ENCODE measurements at regions of chr19 and their contacts with region 1.

Region 1: DNA sequence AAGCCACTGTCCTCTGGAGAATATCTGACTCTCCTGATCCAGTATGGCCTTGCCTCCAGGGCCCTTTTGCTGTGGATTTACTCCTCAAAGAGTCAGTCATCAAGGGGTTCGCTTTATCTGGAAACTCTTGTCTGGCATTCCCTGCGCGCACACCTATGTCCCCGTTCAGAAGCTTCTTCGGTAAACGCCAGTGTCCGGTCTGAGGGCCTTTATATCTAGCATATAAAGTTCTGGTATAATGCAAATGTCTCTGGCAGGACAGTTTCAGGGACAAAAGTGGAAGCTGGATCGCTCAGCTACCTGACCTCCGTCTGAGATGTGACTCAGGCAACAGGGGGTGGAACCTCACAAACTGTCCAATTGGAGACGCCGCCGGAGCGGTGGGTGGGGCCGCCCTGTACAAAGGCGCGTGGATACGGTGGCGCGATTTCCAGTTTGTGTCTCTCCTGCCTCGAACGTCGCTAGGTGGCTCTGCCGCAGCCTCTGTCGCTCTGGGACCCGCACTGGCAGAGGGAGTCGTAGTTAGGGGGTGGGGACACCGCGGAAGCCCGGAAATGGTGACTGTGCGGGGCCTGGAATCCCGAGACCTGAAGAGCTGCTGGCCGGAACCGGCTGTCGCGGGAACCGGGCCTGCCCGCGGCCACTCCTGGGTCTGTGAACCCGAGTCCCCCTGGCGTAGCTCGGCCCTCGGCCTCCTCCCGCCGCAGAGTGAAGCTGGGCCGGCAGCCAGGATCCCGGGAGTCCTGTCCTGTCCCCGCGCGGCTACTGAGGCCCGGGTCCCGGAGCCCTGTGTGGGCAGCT is 10.6 kb upstream of the ZNF709 start:
- DNase-seq: peak; percentile 96
- H3K4me3 ChIP-seq: peak overlapping the region; percentile 70
- H3K4me3 Mint-ChIP-seq: peak overlapping the region; percentile 84
- H3K27ac Mint-ChIP-seq: peak overlapping the region; percentile 95
- H3K4me1 ChIP-seq: no peaks in the 10 kb centered on the region
- H3K4me1 Mint-ChIP-seq: no peaks in the 10 kb centered on the region
- H3K27me3 ChIP-seq: no peaks in the 10 kb centered on the region; the same call in 1 of the 2 replicates
- H3K27me3 Mint-ChIP-seq: no peaks in the 10 kb centered on the region
- CTCF ChIP-seq: peak; percentile 23 to 69

Region 2: GRCh38 chr19:12440541-12441316 is 54.5 kb before region 1 on chr19 and contains the start of gene ZNF443:
- CTCF ChIA-PET with region 1: interaction called, 3 read pairs
- POLR2A ChIA-PET with region 1: interaction called, 7 read pairs
- intact Hi-C with region 1: loop called (anchors 1 kb)
- DNase-seq: peak; percentile 99
- H3K4me3 ChIP-seq: peak within 1 kb of the TSS; percentile 80
- H3K4me3 Mint-ChIP-seq: peak within 1 kb of the TSS; percentile 99
- H3K27ac Mint-ChIP-seq: peak within 1 kb of the TSS; percentile 97
- H3K4me1 ChIP-seq: no peaks in the 10 kb centered on the region
- H3K4me1 Mint-ChIP-seq: no peaks in the 10 kb centered on the region
- H3K27me3 ChIP-seq: no peaks in the 10 kb centered on the region
- H3K27me3 Mint-ChIP-seq: no peaks in the 10 kb centered on the region
- CTCF ChIP-seq: no peak
- total RNA-seq, gene ZNF443: 5.1 and 6.1 TPM in 2 replicates

Region 3: GRCh38 chr19:13952154-13953035 is 1457.2 kb after region 1 on chr19 and contains the start of gene DCAF15:
- CTCF ChIA-PET with region 1: no interaction called
- POLR2A ChIA-PET with region 1: interaction called, 17 read pairs
- intact Hi-C with region 1: no loop called
- DNase-seq: peak; percentile 99
- H3K4me3 ChIP-seq: peak within 1 kb of the TSS; percentile 90
- H3K4me3 Mint-ChIP-seq: peak within 1 kb of the TSS; percentile 71
- H3K27ac Mint-ChIP-seq: peak within 1 kb of the TSS; percentile 81
- H3K4me1 ChIP-seq: 0 out of 2 replicates have a peak, but pooled peaks cover 6% of the 10 kb centered on the region
- H3K4me1 Mint-ChIP-seq: no peaks in the 10 kb centered on the region
- H3K27me3 ChIP-seq: no peaks in the 10 kb centered on the region
- H3K27me3 Mint-ChIP-seq: no peaks in the 10 kb centered on the region
- CTCF ChIP-seq: no peak
- total RNA-seq, gene DCAF15: 41.1 and 43.0 TPM in 2 replicates